ENCODE measurements at regions of chr15 and their contacts with region 1.

Region 1: DNA sequence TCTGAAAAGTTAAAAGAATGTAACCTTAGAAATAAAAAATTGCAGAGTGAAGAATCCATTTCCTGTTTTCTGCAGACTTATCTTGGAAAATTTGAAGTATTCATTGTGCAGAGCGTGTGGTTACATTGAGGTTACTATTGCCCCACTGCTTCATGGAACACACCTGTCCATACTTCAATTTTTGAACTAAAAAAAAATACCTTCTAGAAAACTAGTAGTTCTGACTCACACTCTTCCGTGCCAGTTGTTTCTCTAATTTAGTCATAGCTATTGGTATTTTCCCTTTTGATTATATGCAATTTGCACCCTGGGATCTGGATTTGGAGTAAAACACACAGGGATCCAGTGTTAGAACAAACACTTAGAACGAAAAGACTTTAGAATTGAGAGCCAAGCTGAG is 111.8 kb upstream of the LYSMD4 start:
- DNase-seq: peak; percentile 66
- H3K4me3 Mint-ChIP-seq: no peak overlapping the region
- H3K27ac Mint-ChIP-seq: peak overlapping the region; percentile 62
- H3K4me1 Mint-ChIP-seq: peaks cover 57% of the 10 kb centered on the region
- H3K27me3 Mint-ChIP-seq: no peaks in the 10 kb centered on the region

Region 2: DNA sequence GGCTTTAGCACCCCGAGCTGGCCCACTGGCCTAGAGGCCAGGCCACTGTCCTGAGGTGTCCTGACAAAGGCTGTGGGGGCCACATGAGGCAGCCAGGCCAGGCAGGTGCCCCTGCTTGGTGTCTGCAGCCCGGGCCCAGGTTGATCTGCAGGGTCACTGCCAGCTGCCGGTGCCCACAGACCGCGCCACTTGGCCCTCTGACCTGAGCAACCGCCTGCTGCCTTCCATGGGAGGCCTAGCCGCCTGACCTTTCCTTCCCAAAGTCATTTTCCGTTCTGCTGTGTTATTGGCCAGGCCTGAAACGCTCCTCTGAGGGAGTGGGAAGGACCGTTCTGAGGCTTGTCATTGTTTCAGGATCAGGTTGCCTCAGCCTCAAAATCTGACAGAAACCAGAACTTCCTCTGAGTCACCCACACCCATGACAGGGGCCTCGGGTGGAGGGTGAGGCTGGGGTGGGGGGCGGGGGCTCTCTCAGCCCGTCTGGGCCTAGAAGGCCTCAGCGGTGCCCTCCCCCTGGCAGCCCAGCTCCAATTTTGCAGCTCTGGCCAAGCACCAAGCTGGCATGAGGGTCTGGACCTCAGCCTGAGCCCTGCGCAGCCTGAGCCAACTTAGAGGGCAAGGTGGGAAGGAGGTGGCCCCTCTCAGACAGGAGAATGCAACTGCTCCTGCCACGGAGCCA is 419.9 kb before region 1 on chr15:
- CTCF ChIA-PET with region 1: no interaction called
- intact Hi-C with region 1: loop called (anchors 10 kb)
- DNase-seq: peak; percentile 83
- H3K4me3 Mint-ChIP-seq: no peak overlapping the region
- H3K27ac Mint-ChIP-seq: peak overlapping the region; percentile 53
- H3K4me1 Mint-ChIP-seq: peaks cover 55% of the 10 kb centered on the region
- H3K27me3 Mint-ChIP-seq: no peaks in the 10 kb centered on the region

Region 3: GRCh38 chr15:99644913-99645542 is 200.0 kb before region 1 on chr15:
- CTCF ChIA-PET with region 1: no interaction called
- intact Hi-C with region 1: no loop called
- DNase-seq: no peak
- H3K4me3 Mint-ChIP-seq: no peak overlapping the region
- H3K27ac Mint-ChIP-seq: no peak overlapping the region
- H3K4me1 Mint-ChIP-seq: peaks cover 2% of the 10 kb centered on the region
- H3K27me3 Mint-ChIP-seq: no peaks in the 10 kb centered on the region

Region 4: DNA sequence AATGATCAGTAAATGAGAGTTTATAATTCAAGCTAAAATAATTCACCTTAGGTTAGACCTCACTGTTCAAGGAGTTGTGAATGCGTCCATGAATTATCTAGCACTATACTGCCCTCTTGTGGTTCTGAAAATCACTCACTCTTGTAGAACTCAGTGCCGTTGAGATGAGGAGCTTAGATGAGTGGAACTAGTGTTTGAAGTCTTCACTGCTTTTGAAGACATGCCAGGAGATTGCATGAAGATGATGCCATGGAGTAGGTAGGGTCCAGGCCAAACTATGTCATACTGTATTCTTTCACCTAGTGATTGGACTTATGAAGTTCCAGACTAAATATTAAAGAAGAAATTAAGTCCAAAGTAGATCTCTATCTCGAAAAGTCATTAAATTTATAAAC is 140.6 kb before region 1 on chr15:
- CTCF ChIA-PET with region 1: no interaction called
- intact Hi-C with region 1: no loop called
- DNase-seq: peak; percentile 48
- H3K4me3 Mint-ChIP-seq: no peak overlapping the region
- H3K27ac Mint-ChIP-seq: no peak overlapping the region
- H3K4me1 Mint-ChIP-seq: peaks cover 50% of the 10 kb centered on the region
- H3K27me3 Mint-ChIP-seq: no peaks in the 10 kb centered on the region

Region 5: DNA sequence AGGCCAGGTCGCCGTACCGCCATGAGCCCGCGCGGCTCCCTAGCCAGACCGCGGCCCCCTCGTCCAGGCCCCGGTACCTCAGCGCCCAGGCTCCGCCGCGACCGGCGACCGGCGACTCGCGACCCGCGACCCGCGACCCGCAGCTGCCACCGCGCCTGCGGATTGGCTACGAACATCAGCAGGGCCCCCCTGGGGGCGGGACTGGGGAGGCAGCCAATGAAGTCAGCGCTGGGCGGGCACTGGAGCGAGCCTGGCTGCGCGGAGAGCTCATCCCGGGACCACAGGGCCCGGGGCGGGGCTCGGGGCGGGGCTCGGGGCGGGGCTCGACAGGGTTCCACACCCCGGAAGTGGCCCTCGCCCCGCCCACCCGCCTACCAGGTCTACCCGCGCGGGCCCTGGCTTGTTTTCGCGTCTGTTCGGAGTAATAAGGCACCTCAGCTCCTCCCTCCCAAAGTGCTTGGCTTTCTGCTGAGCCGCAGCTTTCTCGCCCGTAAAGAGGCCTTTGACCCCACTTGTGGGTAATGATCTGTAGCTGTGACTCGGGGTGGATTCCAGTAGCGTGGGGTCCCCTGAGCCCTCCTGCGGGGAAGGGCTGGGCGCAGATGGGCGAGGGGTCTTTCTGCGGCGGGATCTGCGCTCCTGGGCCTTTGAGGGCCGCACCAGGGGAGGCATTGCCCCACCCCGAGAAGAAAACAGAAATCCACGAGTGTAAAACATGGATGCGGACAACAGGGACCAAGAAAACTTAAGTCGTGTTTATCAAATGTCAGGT is 111.6 kb before region 1 on chr15 and contains the start of gene LYSMD4:
- CTCF ChIA-PET with region 1: no interaction called
- intact Hi-C with region 1: loop called (anchors 1 kb)
- DNase-seq: peak; percentile 99
- H3K4me3 Mint-ChIP-seq: peak within 1 kb of the TSS; percentile 81
- H3K27ac Mint-ChIP-seq: peak within 1 kb of the TSS; percentile 86
- H3K4me1 Mint-ChIP-seq: peaks cover 22% of the 10 kb centered on the region
- H3K27me3 Mint-ChIP-seq: no peaks in the 10 kb centered on the region
- total RNA-seq, gene LYSMD4: 4.9 TPM

Region 6: GRCh38 chr15:99826157-99826780 is 18.7 kb before region 1 on chr15:
- CTCF ChIA-PET with region 1: interaction called, 4 read pairs
- intact Hi-C with region 1: loop called (anchors 1 kb)
- DNase-seq: peak; percentile 58
- H3K4me3 Mint-ChIP-seq: peak overlapping the region; percentile 22
- H3K27ac Mint-ChIP-seq: peak overlapping the region; percentile 93
- H3K4me1 Mint-ChIP-seq: peaks cover 53% of the 10 kb centered on the region
- H3K27me3 Mint-ChIP-seq: no peaks in the 10 kb centered on the region